ENCODE measurements at regions of chr3 and their contacts with region 1.

Region 1: GRCh38 chr3:58101499-58102389 is 93.5 kb downstream of the FLNB start:
- DNase-seq: peak; percentile 98
- ATAC-seq: peak; percentile 92
- H3K4me3 ChIP-seq: peak overlapping the region in 1 of 3 experiments; percentile 45; a peak in 1 of 6 replicates
- H3K27ac ChIP-seq: peak overlapping the region; percentile 90
- H3K4me1 ChIP-seq: peaks cover 74% of the 10 kb centered on the region
- H3K27me3 ChIP-seq: no peaks in the 10 kb centered on the region
- CTCF ChIP-seq: no peak
- EP300 ChIP-seq: peak; percentile 95 to 96
- POLR2A ChIP-seq: no peak
- RAD21 ChIP-seq: peak; percentile 43; the same call in 1 of the 2 replicates

Region 2: GRCh38 chr3:56207922-56208321 is 1893.8 kb before region 1 on chr3:
- CTCF ChIA-PET with region 1: no interaction called
- POLR2A ChIA-PET with region 1: no interaction called
- in situ Hi-C with region 1: no loop called
- intact Hi-C with region 1: no loop called
- DNase-seq: no peak
- ATAC-seq: no peak
- H3K4me3 ChIP-seq: no peak overlapping the region
- H3K27ac ChIP-seq: no peak overlapping the region
- H3K4me1 ChIP-seq: no peaks in the 10 kb centered on the region
- H3K27me3 ChIP-seq: no peaks in the 10 kb centered on the region
- CTCF ChIP-seq: no peak
- EP300 ChIP-seq: no peak
- POLR2A ChIP-seq: no peak
- RAD21 ChIP-seq: no peak

Region 3: GRCh38 chr3:57961828-57962447 is 139.8 kb before region 1 on chr3:
- CTCF ChIA-PET with region 1: no interaction called
- POLR2A ChIA-PET with region 1: no interaction called
- in situ Hi-C with region 1: no loop called
- intact Hi-C with region 1: loop called (anchors 5 kb)
- DNase-seq: peak; percentile 80
- ATAC-seq: peak; percentile 47
- H3K4me3 ChIP-seq: peak overlapping the region in 1 of 3 experiments; percentile 60; a peak in 2 of 6 replicates
- H3K27ac ChIP-seq: peak overlapping the region; percentile 74
- H3K4me1 ChIP-seq: peaks cover 59% of the 10 kb centered on the region
- H3K27me3 ChIP-seq: no peaks in the 10 kb centered on the region
- CTCF ChIP-seq: peak; percentile 70
- EP300 ChIP-seq: no peak
- POLR2A ChIP-seq: no peak
- RAD21 ChIP-seq: peak; percentile 78

Region 4: DNA sequence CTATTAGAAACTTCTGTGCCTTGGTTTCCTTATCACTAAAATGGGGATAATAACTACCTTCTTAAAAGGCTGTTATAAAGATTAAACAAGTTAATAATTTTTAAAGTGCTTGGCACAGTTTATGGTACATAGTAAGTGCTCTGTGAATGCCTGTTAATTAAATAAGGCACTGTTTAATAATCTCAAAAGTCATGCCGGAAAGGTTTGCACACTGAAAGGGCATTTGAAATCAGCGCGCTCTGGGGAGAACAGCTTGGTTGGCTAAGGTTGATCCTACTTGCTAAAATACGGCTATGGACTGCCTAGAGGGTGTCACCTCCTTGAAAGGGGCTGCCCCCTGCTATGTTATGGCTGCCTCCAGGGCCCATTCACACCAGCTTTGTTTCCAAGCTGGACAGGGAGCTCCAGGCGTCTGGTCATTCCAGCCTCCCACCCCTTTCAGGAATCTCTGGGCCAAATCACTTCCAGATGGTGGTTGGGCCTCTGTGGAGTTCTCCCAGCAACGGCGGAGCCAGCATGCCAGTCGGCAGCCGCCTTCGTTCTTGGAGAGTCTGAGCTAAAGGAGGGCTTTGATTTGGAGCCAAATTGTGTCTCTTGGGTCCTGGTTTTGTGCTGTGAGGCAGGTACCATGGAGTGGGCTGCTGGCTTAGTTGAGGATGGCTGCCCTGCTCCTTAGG is 87.6 kb before region 1 on chr3:
- CTCF ChIA-PET with region 1: no interaction called
- POLR2A ChIA-PET with region 1: interaction called, 21 read pairs
- in situ Hi-C with region 1: no loop called
- intact Hi-C with region 1: loop called (anchors 2 kb)
- DNase-seq: no peak
- ATAC-seq: no peak
- H3K4me3 ChIP-seq: peak overlapping the region in 1 of 3 experiments; percentile 5; a peak in 1 of 6 replicates
- H3K27ac ChIP-seq: peak overlapping the region; percentile 1
- H3K4me1 ChIP-seq: peaks cover 91% of the 10 kb centered on the region
- H3K27me3 ChIP-seq: no peaks in the 10 kb centered on the region; a peak in 1 of 5 replicates
- CTCF ChIP-seq: no peak
- EP300 ChIP-seq: no peak
- POLR2A ChIP-seq: no peak
- RAD21 ChIP-seq: no peak

Region 5: GRCh38 chr3:58041654-58042324 is 60.0 kb before region 1 on chr3:
- CTCF ChIA-PET with region 1: no interaction called
- POLR2A ChIA-PET with region 1: interaction called, 24 read pairs
- in situ Hi-C with region 1: no loop called
- intact Hi-C with region 1: loop called (anchors 5 kb)
- DNase-seq: peak; percentile 85
- ATAC-seq: peak; percentile 64
- H3K4me3 ChIP-seq: peak overlapping the region in 1 of 3 experiments; percentile 36; a peak in 2 of 6 replicates
- H3K27ac ChIP-seq: peak overlapping the region; percentile 88
- H3K4me1 ChIP-seq: peaks cover 86% of the 10 kb centered on the region
- H3K27me3 ChIP-seq: no peaks in the 10 kb centered on the region
- CTCF ChIP-seq: no peak
- EP300 ChIP-seq: peak in 1 of 2 experiments; percentile 71; a peak in 2 of 4 replicates
- POLR2A ChIP-seq: no peak
- RAD21 ChIP-seq: no peak

Region 6: DNA sequence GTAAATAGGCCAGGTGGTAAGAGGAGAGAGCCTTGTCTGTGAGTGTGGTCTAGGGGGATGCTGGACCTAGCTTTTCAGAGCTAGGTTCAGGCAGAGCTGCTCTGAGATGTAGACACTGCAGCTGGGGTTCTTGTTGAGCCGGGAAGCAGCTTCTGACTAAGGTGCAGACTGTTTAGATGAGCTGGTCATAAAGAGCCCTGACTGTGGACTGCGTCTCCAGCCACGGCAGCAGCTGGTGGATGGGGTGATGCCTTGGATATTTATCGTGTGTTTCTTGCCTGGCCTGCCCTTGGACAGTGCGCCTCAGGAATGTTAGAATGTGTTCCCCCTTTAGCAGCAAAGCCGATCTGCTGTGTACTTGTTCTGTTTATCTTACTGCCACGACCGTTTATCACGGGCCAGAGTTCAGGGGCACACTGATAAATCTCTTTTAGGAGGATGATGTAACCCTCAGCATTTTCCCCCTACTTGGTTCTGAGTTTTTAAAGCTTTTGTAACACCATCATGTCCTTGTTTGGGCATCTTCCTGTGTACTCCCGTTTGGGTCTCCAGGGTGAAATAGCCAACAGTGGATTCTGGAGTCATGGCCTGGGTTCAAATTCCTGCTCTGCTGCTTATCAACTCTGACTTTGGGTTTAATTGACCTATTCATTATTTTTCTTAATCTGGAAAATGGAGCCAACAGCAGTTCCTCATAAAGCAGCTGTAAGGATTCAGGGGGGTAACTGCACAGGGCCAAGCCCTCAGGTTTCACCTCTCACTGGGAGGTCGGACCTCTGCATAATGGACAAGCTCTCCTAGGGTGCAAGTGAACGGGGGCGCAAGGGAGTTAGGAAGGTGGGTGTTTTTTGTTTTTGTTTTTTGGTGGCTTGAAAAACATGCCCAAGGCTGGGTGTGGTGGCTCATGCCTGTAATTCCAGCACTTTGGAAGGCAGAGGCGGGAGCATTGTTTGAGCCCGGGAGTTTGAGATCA is 42.1 kb before region 1 on chr3:
- CTCF ChIA-PET with region 1: no interaction called
- POLR2A ChIA-PET with region 1: interaction called, 46 read pairs
- in situ Hi-C with region 1: no loop called
- intact Hi-C with region 1: no loop called
- DNase-seq: peak; percentile 99
- ATAC-seq: peak; percentile 96
- H3K4me3 ChIP-seq: peak overlapping the region in 1 of 3 experiments; percentile 31; a peak in 2 of 6 replicates
- H3K27ac ChIP-seq: peak overlapping the region; percentile 94
- H3K4me1 ChIP-seq: peaks cover 92% of the 10 kb centered on the region
- H3K27me3 ChIP-seq: no peaks in the 10 kb centered on the region; a peak in 1 of 5 replicates
- CTCF ChIP-seq: 0 out of 2 replicates have a peak, but pooled peaks have one; percentile 16
- EP300 ChIP-seq: peak; percentile 95 to 99
- POLR2A ChIP-seq: peak; percentile 15 to 88; a peak in 3 of 4 replicates
- RAD21 ChIP-seq: peak; percentile 44; the same call in 1 of the 2 replicates

Region 7: GRCh38 chr3:58072052-58072762 is 29.5 kb before region 1 on chr3:
- CTCF ChIA-PET with region 1: no interaction called
- POLR2A ChIA-PET with region 1: interaction called, 16 read pairs
- in situ Hi-C with region 1: no loop called
- intact Hi-C with region 1: loop called (anchors 5 kb)
- DNase-seq: no peak
- ATAC-seq: no peak
- H3K4me3 ChIP-seq: no peak overlapping the region
- H3K27ac ChIP-seq: peak overlapping the region; percentile 52
- H3K4me1 ChIP-seq: peaks cover 69% of the 10 kb centered on the region
- H3K27me3 ChIP-seq: no peaks in the 10 kb centered on the region
- CTCF ChIP-seq: no peak
- EP300 ChIP-seq: no peak
- POLR2A ChIP-seq: no peak
- RAD21 ChIP-seq: no peak

Region 8: DNA sequence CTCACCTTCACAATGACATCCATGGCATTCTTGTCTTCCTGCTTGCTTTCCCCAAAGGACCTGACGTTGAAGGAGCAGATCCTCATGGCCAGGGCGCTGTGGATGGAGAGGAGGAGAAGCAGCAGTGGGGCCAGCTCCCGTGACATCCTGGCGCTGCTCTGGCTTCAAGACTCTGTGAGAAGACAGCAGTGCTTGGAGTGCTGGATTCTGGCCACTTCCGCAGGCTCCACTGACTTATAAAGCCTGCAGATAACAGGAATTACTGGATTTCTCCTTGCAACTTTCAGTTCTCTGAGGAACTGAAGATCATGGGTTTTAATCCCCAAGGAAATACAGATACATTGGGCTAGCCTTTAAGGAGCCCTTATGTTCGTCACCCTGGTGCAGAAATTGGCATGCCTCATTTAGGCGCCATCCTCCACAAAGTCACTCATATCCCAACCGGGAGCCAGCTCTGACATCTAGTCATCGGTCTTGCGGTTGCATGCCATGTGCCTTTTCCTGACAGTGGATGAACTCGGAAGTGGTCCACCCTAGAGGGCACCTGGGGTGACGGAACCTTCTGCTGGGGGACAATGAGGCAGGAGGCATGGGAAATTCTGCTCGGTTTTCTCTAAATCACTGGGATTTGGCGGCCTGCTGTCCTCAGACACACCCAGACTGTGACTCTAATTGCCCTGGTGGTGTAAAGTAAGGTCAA is 109.2 kb after region 1 on chr3 and contains the start of gene DNASE1L3:
- CTCF ChIA-PET with region 1: no interaction called
- POLR2A ChIA-PET with region 1: no interaction called
- in situ Hi-C with region 1: no loop called
- intact Hi-C with region 1: no loop called
- DNase-seq: no peak
- ATAC-seq: no peak
- H3K4me3 ChIP-seq: no peak within 1 kb of the TSS
- H3K27ac ChIP-seq: no peak within 1 kb of the TSS
- H3K4me1 ChIP-seq: peaks cover 76% of the 10 kb centered on the region
- H3K27me3 ChIP-seq: no peaks in the 10 kb centered on the region
- CTCF ChIP-seq: no peak
- EP300 ChIP-seq: no peak
- POLR2A ChIP-seq: no peak
- RAD21 ChIP-seq: no peak
- total RNA-seq, gene DNASE1L3: 0.55 and 0.86 TPM in 2 replicates

Region 9: GRCh38 chr3:58965865-58966264 is 864.1 kb after region 1 on chr3:
- CTCF ChIA-PET with region 1: no interaction called
- POLR2A ChIA-PET with region 1: no interaction called
- in situ Hi-C with region 1: no loop called
- intact Hi-C with region 1: no loop called
- DNase-seq: no peak
- ATAC-seq: no peak
- H3K4me3 ChIP-seq: no peak overlapping the region
- H3K27ac ChIP-seq: no peak overlapping the region
- H3K4me1 ChIP-seq: no peaks in the 10 kb centered on the region
- H3K27me3 ChIP-seq: no peaks in the 10 kb centered on the region
- CTCF ChIP-seq: no peak
- EP300 ChIP-seq: no peak
- POLR2A ChIP-seq: no peak
- RAD21 ChIP-seq: no peak